CD14-positive monocyte (primary cell): ENCODE measurements at regions of chr12 and their contacts with region 1.

Region 1: DNA sequence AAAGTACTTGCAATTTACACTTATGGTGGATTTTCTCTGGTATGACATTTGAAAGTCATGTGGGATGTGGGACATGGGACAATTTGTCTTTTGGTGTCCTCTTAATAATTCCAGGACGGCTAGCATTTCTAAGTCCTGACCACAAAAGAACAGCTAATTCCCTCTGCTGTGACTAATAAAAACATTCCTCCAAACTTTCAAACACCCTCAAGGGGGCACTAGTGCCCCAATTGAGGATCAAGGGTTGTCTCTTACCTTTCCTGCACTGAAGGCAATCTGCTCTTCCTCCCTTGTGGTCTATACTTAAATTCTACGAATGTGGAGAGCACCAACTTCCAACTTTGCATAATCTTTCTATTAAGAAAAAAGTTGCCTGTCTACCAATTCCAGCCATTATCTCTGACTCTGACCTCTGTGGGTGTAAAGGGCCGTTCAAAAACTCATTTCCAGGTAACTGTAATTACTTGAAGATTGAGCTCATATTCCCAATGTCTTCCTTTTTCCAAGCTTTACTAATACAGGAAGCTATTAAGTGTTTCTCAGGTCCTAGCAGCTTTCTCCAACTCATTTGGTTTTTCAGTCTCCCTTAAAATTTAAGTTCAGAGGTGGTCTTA is 210.2 kb downstream of the PTPRO start:
- DNase-seq: peak; percentile 51 to 70 (median 65)
- H3K4me3 ChIP-seq: no peak overlapping the region
- H3K4me3 Mint-ChIP-seq: peak overlapping the region in 1 of 2 donors; percentile 8
- H3K27ac ChIP-seq: no peak overlapping the region
- H3K27ac Mint-ChIP-seq: no peak overlapping the region
- H3K4me1 ChIP-seq: peaks cover 32% of the 10 kb centered on the region in 2 donors
- H3K4me1 Mint-ChIP-seq: peaks cover 7% of the 10 kb centered on the region
- H3K27me3 ChIP-seq: no peaks in the 10 kb centered on the region
- H3K27me3 Mint-ChIP-seq: peaks cover 0 to 6% (median 3%) of the 10 kb centered on the region in 3 donors
- CTCF ChIP-seq: peak; percentile 80

Region 2: DNA sequence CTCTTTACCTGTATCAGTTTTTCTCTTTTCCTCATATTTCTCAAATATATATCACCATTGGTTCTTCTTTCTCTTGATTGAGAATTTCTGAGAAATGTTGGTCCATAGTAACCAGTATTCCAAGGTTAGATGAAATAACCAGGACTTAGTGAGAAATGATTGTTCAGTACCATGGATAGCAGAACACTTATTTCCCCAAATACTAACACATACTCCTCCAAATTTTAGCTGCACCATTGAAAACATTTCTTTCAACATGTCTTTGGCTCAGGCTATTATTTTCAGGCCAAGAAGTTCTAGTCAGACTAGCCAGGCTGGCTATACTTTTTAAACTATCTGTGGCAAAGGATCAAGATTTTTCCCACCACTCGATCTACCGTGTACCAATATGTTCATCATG is 96.9 kb before region 1 on chr12:
- intact Hi-C with region 1: no loop called
- DNase-seq: no peak
- H3K4me3 ChIP-seq: no peak overlapping the region
- H3K4me3 Mint-ChIP-seq: no peak overlapping the region
- H3K27ac ChIP-seq: no peak overlapping the region
- H3K27ac Mint-ChIP-seq: no peak overlapping the region
- H3K4me1 ChIP-seq: no peaks in the 10 kb centered on the region
- H3K4me1 Mint-ChIP-seq: no peaks in the 10 kb centered on the region
- H3K27me3 ChIP-seq: no peaks in the 10 kb centered on the region
- H3K27me3 Mint-ChIP-seq: peaks cover 0 to 5% (median 4%) of the 10 kb centered on the region in 3 donors
- CTCF ChIP-seq: no peak

Region 3: DNA sequence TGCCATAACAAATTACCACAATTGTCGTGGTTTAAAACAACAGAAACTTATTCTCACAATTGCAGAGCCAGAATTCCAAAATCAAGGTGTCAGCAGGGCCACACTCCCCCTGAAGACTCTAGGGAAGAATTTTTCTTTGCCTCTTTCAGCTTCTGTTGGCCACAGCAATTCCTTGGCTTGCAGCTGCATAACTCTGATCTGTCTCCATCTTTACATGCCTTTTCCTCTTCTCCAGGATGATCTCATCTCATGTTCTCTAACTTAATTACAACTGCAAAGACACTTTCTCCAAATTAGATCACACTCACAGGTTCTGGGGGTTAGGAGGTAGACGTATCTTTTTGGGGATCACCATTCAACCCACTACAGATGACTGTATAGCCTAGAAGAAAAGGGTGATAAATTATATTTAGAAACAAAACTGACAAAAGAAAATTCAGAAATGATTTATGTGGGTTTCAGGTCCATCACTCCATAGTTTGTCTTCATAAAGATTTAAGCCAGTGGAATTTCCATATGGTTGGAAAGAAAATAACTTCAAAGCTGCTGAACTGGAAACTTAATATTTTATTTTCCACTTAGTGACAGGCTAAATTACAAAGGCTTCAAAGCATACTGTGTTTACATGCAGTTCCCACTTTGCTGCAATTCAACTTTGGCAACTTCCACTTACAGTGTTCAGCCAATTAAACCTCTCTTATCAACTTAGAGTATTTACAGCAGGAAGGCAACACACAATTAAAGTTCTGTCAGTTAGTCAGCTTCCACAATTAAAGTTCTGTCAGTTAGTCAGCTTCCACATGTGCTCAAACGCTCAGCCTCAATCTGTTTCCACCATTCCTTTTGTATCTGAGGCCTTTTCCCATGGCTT is 43.4 kb after region 1 on chr12:
- intact Hi-C with region 1: loop called (anchors 2 to 5 kb)
- DNase-seq: no peak
- H3K4me3 ChIP-seq: no peak overlapping the region
- H3K4me3 Mint-ChIP-seq: no peak overlapping the region
- H3K27ac ChIP-seq: no peak overlapping the region
- H3K27ac Mint-ChIP-seq: peak overlapping the region in 3 of 7 donors; percentile 7 to 61 (median 43)
- H3K4me1 ChIP-seq: peaks cover 20 to 34% of the 10 kb centered on the region in 2 donors
- H3K4me1 Mint-ChIP-seq: peaks cover 35% of the 10 kb centered on the region
- H3K27me3 ChIP-seq: no peaks in the 10 kb centered on the region
- H3K27me3 Mint-ChIP-seq: no peaks in the 10 kb centered on the region
- CTCF ChIP-seq: no peak

Region 4: GRCh38 chr12:15584366-15585041 is 52.0 kb after region 1 on chr12:
- intact Hi-C with region 1: loop called (anchors 2 to 5 kb)
- DNase-seq: peak; percentile 45 to 68 (median 63)
- H3K4me3 ChIP-seq: no peak overlapping the region
- H3K4me3 Mint-ChIP-seq: no peak overlapping the region
- H3K27ac ChIP-seq: no peak overlapping the region
- H3K27ac Mint-ChIP-seq: no peak overlapping the region
- H3K4me1 ChIP-seq: no peaks in the 10 kb centered on the region
- H3K4me1 Mint-ChIP-seq: no peaks in the 10 kb centered on the region
- H3K27me3 ChIP-seq: no peaks in the 10 kb centered on the region
- H3K27me3 Mint-ChIP-seq: peaks cover 0 to 1% (median under 1%) of the 10 kb centered on the region in 3 donors
- CTCF ChIP-seq: peak; percentile 88

Region 5: GRCh38 chr12:15700595-15700994 is 168.1 kb after region 1 on chr12:
- intact Hi-C with region 1: loop called in 1 of 2 experiments (anchors 10 kb)
- DNase-seq: peak; percentile 81 to 95 (median 94)
- H3K4me3 ChIP-seq: peak overlapping the region in 1 of 3 experiments; percentile 8
- H3K4me3 Mint-ChIP-seq: peak overlapping the region in 1 of 2 donors; percentile 32
- H3K27ac ChIP-seq: peak overlapping the region in 1 of 2 donors; percentile 83
- H3K27ac Mint-ChIP-seq: peak overlapping the region; percentile 79 to 95 (median 91)
- H3K4me1 ChIP-seq: peaks cover 50 to 58% of the 10 kb centered on the region in 2 donors
- H3K4me1 Mint-ChIP-seq: peaks cover 53% of the 10 kb centered on the region
- H3K27me3 ChIP-seq: no peaks in the 10 kb centered on the region
- H3K27me3 Mint-ChIP-seq: peaks cover 0 to 3% (median 0%) of the 10 kb centered on the region in 3 donors
- CTCF ChIP-seq: no peak

Region 6: GRCh38 chr12:15856097-15856982 is 323.9 kb after region 1 on chr12:
- intact Hi-C with region 1: loop called in 1 of 2 experiments (anchors 10 kb)
- DNase-seq: peak; percentile 41 to 60 (median 57)
- H3K4me3 ChIP-seq: no peak overlapping the region
- H3K4me3 Mint-ChIP-seq: no peak overlapping the region
- H3K27ac ChIP-seq: no peak overlapping the region
- H3K27ac Mint-ChIP-seq: no peak overlapping the region
- H3K4me1 ChIP-seq: no peaks in the 10 kb centered on the region
- H3K4me1 Mint-ChIP-seq: peaks cover 3% of the 10 kb centered on the region
- H3K27me3 ChIP-seq: no peaks in the 10 kb centered on the region
- H3K27me3 Mint-ChIP-seq: peaks cover 0 to 2% (median 0%) of the 10 kb centered on the region in 3 donors
- CTCF ChIP-seq: peak; percentile 91